Endothelial cell of umbilical vein (primary cell): ENCODE measurements at regions of chr18 and their contacts with region 1.

Region 1: GRCh38 chr18:56136105-56136504 is 502.3 kb downstream of the TXNL1 start:
- DNase-seq: no peak
- H3K4me3 ChIP-seq: no peak overlapping the region
- H3K27ac ChIP-seq: no peak overlapping the region
- H3K4me1 ChIP-seq: no peaks in the 10 kb centered on the region
- H3K27me3 ChIP-seq: no peaks in the 10 kb centered on the region
- CTCF ChIP-seq: no peak
- POLR2A ChIP-seq: no peak

Region 2: DNA sequence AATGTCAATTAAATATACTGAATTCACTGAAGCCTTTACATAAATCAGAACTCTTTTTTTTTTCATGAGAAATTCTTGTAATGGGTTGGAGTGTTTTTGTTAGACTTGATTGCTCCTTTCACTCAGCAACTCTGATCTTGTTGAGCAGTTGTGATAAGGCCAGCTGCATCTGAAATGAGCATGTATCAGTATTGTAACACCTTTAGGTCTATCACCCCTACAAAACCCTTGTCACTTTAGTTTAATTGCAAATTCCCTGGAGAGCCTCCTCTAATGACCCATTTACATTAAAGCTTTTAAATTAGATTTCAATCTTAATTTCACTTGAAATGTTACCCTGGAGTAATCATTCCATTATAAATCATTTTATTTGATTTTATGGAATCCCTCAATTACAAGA is 201.3 kb before region 1 on chr18:
- CTCF ChIA-PET with region 1: no interaction called
- POLR2A ChIA-PET with region 1: no interaction called
- dilution Hi-C with region 1: no loop called
- intact Hi-C with region 1: no loop called
- DNase-seq: no peak
- H3K4me3 ChIP-seq: no peak overlapping the region
- H3K27ac ChIP-seq: no peak overlapping the region
- H3K4me1 ChIP-seq: no peaks in the 10 kb centered on the region
- H3K27me3 ChIP-seq: no peaks in the 10 kb centered on the region
- CTCF ChIP-seq: no peak
- POLR2A ChIP-seq: no peak

Region 3: GRCh38 chr18:56175330-56176001 is 39.4 kb after region 1 on chr18:
- CTCF ChIA-PET with region 1: no interaction called
- POLR2A ChIA-PET with region 1: no interaction called
- dilution Hi-C with region 1: no loop called
- intact Hi-C with region 1: loop called (anchors 2 kb)
- DNase-seq: no peak
- H3K4me3 ChIP-seq: no peak overlapping the region
- H3K27ac ChIP-seq: no peak overlapping the region
- H3K4me1 ChIP-seq: no peaks in the 10 kb centered on the region
- H3K27me3 ChIP-seq: no peaks in the 10 kb centered on the region
- CTCF ChIP-seq: no peak
- POLR2A ChIP-seq: no peak